CD8-positive, alpha-beta T cell (primary cell): ENCODE measurements at regions of chr15 and their contacts with region 1.

Region 1: DNA sequence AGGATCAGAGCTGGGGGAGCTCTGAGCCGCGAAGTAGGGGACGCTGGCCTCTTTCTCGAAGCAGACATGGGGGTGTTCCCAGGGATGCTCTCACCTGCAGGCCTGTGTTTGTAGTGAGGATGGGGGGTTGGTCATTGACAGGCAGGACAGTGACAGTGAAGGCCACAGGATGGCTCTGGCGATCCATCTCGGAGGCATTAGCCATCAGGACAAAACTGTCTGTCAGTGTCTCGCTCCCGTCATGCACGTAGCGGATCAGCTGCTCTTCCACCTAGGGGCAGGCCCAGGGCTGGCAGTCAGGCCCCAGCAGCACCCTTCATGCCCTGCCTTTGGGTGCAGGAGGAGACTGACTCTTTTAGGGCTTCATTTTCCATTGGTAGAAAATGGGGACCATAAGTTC is 28.0 kb downstream of the CSPG4 start:
- DNase-seq: no peak
- ATAC-seq: no peak
- H3K4me3 ChIP-seq: no peak overlapping the region
- H3K4me3 Mint-ChIP-seq: no peak overlapping the region
- H3K27ac ChIP-seq: no peak overlapping the region
- H3K27ac Mint-ChIP-seq: no peak overlapping the region
- H3K4me1 ChIP-seq: no peaks in the 10 kb centered on the region
- H3K4me1 Mint-ChIP-seq: peaks cover 2% of the 10 kb centered on the region
- H3K27me3 ChIP-seq: no peaks in the 10 kb centered on the region
- H3K27me3 Mint-ChIP-seq: no peaks in the 10 kb centered on the region
- CTCF ChIP-seq: no peak

Region 2: GRCh38 chr15:75171408-75171807 is 513.2 kb before region 1 on chr15:
- CTCF ChIA-PET with region 1: no interaction called
- POLR2A ChIA-PET with region 1: no interaction called
- intact Hi-C with region 1: no loop called
- DNase-seq: no peak
- ATAC-seq: no peak
- H3K4me3 ChIP-seq: no peak overlapping the region
- H3K4me3 Mint-ChIP-seq: no peak overlapping the region
- H3K27ac ChIP-seq: no peak overlapping the region
- H3K27ac Mint-ChIP-seq: no peak overlapping the region
- H3K4me1 ChIP-seq: no peaks in the 10 kb centered on the region
- H3K4me1 Mint-ChIP-seq: peaks cover 3% of the 10 kb centered on the region
- H3K27me3 ChIP-seq: no peaks in the 10 kb centered on the region
- H3K27me3 Mint-ChIP-seq: peaks cover 6% of the 10 kb centered on the region
- CTCF ChIP-seq: no peak

Region 3: GRCh38 chr15:75508840-75509532 is 175.7 kb before region 1 on chr15:
- CTCF ChIA-PET with region 1: interaction called, 6 read pairs
- POLR2A ChIA-PET with region 1: no interaction called
- intact Hi-C with region 1: loop called in 1 of 2 experiments (anchors 1 kb)
- DNase-seq: peak in 5 of 9 experiments; percentile 11 to 64 (median 26)
- ATAC-seq: peak; percentile 54
- H3K4me3 ChIP-seq: no peak overlapping the region
- H3K4me3 Mint-ChIP-seq: no peak overlapping the region
- H3K27ac ChIP-seq: no peak overlapping the region
- H3K27ac Mint-ChIP-seq: peak overlapping the region; percentile 50
- H3K4me1 ChIP-seq: no peaks in the 10 kb centered on the region
- H3K4me1 Mint-ChIP-seq: peaks cover 5% of the 10 kb centered on the region
- H3K27me3 ChIP-seq: no peaks in the 10 kb centered on the region
- H3K27me3 Mint-ChIP-seq: no peaks in the 10 kb centered on the region
- CTCF ChIP-seq: peak; percentile 54

Region 4: DNA sequence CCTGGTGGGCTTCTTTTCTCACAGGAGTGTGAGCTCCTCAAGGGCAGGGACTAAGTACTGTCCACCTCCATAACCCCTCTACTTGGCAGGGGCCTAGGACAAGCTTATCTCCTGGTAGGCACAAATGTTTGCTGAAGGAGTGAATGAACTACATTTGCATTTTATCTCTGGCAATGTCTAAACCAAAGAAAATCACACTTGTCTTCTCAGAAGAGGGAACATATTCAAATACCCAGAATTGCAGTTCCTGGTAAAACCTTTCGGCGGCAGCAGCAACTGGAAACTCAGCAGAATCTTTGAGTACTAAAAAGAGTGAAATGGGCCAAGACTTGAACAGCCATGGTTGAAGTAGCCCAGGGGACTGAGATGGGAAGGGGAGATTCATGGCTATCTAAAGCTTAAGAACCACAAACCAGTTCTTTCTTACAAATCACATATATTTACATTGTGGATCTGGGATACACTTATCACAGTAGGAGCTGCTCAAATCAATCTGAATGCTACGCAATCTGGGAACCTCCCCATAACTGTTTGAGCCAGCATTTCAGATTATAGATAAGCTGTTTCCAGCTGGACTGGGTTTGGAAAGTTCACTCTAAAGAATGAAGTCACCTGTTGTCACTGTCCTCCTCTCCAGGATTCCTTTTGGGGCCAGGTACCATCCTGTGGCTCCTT is 86.8 kb before region 1 on chr15:
- CTCF ChIA-PET with region 1: interaction called, 4 read pairs
- POLR2A ChIA-PET with region 1: no interaction called
- intact Hi-C with region 1: loop called in 1 of 2 experiments (anchors 5 kb)
- DNase-seq: peak in 4 of 9 experiments; percentile 22 to 55 (median 39)
- ATAC-seq: peak; percentile 44
- H3K4me3 ChIP-seq: no peak overlapping the region
- H3K4me3 Mint-ChIP-seq: no peak overlapping the region
- H3K27ac ChIP-seq: no peak overlapping the region
- H3K27ac Mint-ChIP-seq: no peak overlapping the region
- H3K4me1 ChIP-seq: peaks cover 13% of the 10 kb centered on the region
- H3K4me1 Mint-ChIP-seq: peaks cover 12% of the 10 kb centered on the region
- H3K27me3 ChIP-seq: no peaks in the 10 kb centered on the region
- H3K27me3 Mint-ChIP-seq: no peaks in the 10 kb centered on the region
- CTCF ChIP-seq: peak; percentile 52